ENCODE measurements at regions of chr5 and their contacts with region 1.

Region 1: DNA sequence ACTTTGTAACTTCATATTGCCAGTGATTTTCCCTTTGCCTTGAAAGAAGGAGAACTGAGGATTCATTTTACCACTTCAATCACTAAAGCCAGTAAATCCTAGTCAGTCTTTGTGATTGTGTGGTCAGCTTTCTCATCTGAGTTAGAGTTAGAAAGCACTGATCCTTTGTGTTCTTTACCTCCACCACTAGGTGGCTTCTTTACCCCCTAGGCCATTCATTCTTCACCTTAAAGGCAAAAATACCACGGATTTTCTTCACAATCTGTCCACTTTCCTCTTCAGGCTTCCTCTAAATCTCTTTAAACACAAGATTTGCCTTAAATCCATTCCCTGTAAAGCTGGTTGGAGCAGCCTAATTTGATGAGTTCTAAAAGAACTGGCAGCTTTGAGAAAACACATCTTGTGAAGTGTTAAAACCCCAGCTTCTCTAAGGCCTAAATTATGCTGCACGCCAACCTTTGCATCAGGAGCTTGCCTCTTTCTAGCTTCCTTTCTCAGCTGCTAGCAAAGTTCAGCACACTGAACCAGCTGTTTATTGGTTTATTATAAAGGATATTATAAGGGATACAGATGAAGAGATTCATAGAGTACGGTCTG is 20.4 kb downstream of the BDP1 start:
- DNase-seq: no peak
- H3K4me3 ChIP-seq: no peak overlapping the region
- H3K27ac ChIP-seq: no peak overlapping the region
- H3K4me1 ChIP-seq: no peaks in the 10 kb centered on the region
- H3K27me3 ChIP-seq: no peaks in the 10 kb centered on the region
- CTCF ChIP-seq: peak; percentile 78

Region 2: GRCh38 chr5:71522151-71522550 is 46.3 kb after region 1 on chr5:
- CTCF ChIA-PET with region 1: interaction called, 13 read pairs
- POLR2A ChIA-PET with region 1: no interaction called
- intact Hi-C with region 1: no loop called
- DNase-seq: no peak
- H3K4me3 ChIP-seq: no peak overlapping the region
- H3K27ac ChIP-seq: no peak overlapping the region
- H3K4me1 ChIP-seq: no peaks in the 10 kb centered on the region
- H3K27me3 ChIP-seq: no peaks in the 10 kb centered on the region
- CTCF ChIP-seq: no peak

Region 3: DNA sequence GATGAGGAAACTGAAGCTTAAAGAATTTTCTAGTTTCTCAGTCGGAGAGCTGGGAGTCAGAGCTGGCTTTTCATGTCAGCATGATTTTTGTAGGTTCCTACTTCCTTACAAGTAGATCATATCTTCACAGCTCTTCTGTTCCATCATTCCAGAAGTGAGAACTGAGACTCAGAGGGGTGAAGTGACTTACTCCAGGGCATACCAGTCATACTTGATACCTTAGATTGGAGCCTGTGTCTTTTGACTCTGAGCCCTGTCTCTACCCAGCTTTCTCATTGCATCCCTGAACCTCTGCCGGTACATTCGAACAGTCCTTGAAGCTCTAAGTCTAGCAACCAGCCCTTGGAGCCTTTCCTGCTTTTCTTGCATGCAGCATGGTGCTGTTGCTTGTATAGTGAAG is 164.5 kb after region 1 on chr5:
- CTCF ChIA-PET with region 1: interaction called, 14 read pairs
- POLR2A ChIA-PET with region 1: no interaction called
- intact Hi-C with region 1: no loop called
- DNase-seq: no peak
- H3K4me3 ChIP-seq: no peak overlapping the region
- H3K27ac ChIP-seq: no peak overlapping the region
- H3K4me1 ChIP-seq: no peaks in the 10 kb centered on the region
- H3K27me3 ChIP-seq: no peaks in the 10 kb centered on the region
- CTCF ChIP-seq: no peak

Region 4: DNA sequence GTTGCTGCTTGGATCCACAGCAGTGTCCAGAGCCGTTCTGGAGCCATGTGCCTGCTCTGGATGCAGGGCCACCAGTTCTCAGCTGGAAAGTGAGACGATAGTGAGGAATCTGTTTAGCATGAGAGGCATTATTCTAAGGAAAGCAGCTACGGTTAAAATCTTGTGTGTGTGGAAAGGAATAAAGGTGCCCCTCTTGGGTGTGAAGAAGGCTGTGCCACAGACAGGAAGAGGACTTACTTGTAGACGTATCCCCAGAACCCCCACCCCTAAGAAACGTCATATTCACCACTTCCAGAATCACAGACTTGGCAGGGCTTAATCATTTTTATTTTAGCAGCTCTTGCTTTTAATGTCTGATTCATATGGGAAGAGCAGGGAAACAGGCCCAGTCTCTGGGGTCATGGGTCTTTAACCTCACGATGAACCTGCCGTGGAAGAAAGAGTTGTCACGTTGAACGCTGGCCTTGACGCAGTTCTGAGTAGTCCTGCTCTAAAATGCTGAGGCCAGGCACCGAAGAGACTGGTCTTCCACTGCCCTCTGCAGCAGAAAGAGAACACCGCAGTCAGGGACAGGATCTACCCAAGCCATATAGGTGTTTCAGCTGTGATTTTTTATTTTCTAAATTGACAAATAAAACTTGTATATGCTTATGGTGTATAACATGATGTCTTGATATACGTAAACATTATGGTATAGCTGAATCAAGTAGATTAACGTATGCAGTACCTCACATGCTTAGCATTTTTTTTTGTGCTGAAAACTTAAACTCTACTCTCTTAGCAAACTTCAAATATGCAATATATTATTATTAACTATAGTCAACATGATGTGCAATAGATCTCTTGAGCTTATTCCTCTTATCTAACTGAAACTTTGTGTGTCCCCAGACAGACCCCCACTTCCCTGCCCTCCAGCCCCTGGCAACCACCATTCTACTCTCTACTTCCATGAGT is 282.0 kb after region 1 on chr5:
- CTCF ChIA-PET with region 1: interaction called, 3 read pairs
- POLR2A ChIA-PET with region 1: no interaction called
- intact Hi-C with region 1: loop called (anchors 1 kb)
- DNase-seq: peak; percentile 49 to 61
- H3K4me3 ChIP-seq: no peak overlapping the region
- H3K27ac ChIP-seq: no peak overlapping the region
- H3K4me1 ChIP-seq: no peaks in the 10 kb centered on the region
- H3K27me3 ChIP-seq: no peaks in the 10 kb centered on the region
- CTCF ChIP-seq: peak; percentile 82